ENCODE measurements at regions of chr10 and their contacts with region 1.

Region 1: GRCh38 chr10:4941540-4942330 is 21.5 kb upstream of the AKR1C1 start:
- DNase-seq: peak; percentile 81 to 85
- H3K4me3 ChIP-seq: no peak overlapping the region
- H3K27ac ChIP-seq: peak overlapping the region; percentile 100
- H3K4me1 ChIP-seq: peaks cover 77% of the 10 kb centered on the region
- H3K27me3 ChIP-seq: no peaks in the 10 kb centered on the region
- CTCF ChIP-seq: no peak

Region 2: DNA sequence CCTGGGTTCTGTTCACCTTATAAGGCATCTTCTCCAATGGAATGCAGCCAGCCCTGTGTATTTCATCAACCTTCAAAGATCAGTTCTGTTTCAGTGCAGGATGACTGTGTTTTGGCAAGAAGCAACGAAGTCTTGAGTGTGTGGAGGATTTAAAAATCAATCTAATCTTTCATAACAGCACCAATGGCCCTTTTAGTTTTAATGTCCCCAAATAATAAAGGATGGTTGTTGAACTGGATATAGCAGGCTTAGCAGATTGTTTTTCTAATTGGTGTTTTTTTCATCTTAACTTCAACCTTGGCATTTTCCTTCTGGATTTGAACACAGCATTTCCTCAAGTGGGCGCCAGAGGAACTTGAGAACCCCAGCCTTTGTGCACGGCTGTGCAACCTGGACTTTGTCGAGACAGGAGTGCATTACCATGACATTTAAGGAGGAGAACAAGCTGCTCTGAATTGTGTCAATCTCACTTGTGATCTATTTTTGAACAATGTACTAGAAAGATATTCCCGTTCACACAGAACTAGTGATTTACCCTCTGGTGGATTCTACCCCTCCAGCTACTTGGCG is 429.0 kb before region 1 on chr10:
- CTCF ChIA-PET with region 1: no interaction called
- POLR2A ChIA-PET with region 1: no interaction called
- intact Hi-C with region 1: no loop called
- DNase-seq: peak in 1 of 2 experiments; percentile 3
- H3K4me3 ChIP-seq: no peak overlapping the region
- H3K27ac ChIP-seq: no peak overlapping the region
- H3K4me1 ChIP-seq: no peaks in the 10 kb centered on the region
- H3K27me3 ChIP-seq: no peaks in the 10 kb centered on the region
- CTCF ChIP-seq: peak; percentile 33; the same call in 1 of the 2 replicates

Region 3: DNA sequence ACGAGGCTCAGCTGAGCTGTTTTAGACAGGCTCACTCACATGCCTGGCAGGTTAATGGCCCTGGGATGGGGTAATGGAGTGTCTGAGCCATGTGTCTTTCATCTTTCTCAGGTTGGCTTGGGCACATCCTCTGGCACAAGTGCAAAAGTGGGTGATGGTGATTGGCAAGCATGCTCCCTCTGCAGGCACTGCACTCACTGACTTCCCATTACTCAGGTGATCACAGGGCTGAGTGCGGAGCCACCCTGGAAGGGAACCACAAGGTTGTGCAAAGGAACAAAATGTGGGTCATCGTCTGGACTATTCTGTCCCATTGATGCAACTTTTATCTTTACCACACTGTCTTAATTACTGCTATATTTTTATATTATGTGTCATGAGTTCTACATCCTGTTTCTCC is 359.8 kb before region 1 on chr10:
- CTCF ChIA-PET with region 1: no interaction called
- POLR2A ChIA-PET with region 1: no interaction called
- intact Hi-C with region 1: no loop called
- DNase-seq: no peak
- H3K4me3 ChIP-seq: no peak overlapping the region
- H3K27ac ChIP-seq: no peak overlapping the region
- H3K4me1 ChIP-seq: no peaks in the 10 kb centered on the region
- H3K27me3 ChIP-seq: no peaks in the 10 kb centered on the region
- CTCF ChIP-seq: no peak

Region 4: DNA sequence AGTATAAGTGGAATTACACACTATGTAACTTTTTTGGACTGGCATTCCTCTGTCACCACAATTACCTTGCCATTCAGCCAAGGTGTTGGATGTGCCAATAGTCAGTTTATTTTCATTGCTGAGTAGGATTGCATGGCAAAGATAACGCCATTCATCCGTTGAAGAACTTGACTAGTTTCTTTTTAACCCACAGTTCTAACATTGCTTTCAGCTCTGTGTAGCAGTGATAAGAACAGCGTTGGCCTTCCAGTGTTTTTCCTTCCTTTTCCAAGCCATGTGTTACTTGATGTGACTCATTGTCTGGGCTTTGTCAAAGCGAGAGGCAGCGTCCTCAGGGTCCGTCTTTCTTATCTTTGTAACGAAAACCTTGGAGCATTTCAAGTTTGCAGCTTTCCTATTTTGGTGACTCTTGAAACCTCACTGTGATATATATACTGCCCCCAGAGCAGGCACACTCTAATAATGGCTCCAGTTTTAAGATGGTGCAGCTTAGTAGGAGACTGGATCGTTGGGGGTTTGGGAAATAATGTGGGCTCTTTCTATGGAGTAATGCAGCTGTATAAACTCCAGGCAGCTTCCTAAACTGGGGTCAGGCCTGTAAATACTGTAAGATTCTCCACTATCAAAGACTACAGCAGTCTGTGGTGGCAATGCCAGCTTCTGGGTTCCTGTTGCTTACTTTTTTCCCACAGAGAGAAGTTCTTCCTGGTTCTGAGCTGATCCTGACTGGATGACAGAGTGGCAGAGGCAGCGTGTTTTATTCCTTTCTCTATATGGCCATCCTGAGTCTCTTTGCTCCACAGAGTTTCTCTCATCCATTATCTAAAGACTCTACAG is 74.0 kb before region 1 on chr10:
- CTCF ChIA-PET with region 1: no interaction called
- POLR2A ChIA-PET with region 1: no interaction called
- intact Hi-C with region 1: loop called (anchors 5 kb)
- DNase-seq: no peak
- H3K4me3 ChIP-seq: no peak overlapping the region
- H3K27ac ChIP-seq: no peak overlapping the region
- H3K4me1 ChIP-seq: no peaks in the 10 kb centered on the region
- H3K27me3 ChIP-seq: no peaks in the 10 kb centered on the region
- CTCF ChIP-seq: no peak

Measured in PC-9 (cell line).